K562 (cell line): ENCODE measurements at regions of chr1 and their contacts with region 1.

Region 1: DNA sequence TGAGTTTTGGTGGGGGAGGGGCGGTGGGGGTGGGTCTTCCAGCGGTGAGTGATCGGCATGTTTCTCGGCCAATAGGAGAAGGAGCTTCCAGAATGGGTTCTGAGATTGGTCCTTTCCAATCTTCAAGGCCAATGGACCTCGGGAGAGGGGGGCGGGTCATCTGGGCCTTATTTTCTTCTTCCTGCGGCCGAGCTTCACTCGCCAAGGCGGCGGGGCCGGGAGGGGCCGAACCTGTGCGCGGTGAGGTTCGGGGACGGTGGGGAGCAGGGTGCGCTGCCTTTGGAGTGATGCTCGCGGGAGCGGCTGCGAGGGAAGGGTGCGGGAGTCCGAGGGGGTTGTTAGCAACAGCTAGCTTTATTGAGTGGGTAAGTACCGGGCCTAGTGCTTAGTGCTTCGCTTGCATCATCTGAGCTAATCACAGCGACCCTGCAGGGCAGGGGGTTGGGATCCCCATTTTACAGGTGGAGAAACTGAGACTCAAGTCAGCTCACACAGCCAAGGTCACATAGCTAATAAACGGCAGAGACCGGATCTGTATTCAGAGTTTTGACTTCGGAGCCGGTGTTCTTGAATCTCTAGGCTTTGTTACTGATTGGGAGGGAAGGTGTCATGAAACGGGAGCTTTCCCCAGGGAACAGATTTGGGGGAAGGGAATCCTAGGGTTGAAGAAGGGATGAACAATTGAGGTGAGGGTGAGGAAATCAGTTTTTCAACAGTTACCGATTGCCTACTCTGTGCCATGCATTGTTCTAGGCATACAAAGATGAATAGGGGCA is 549 bp downstream of the KDM4A start:
- DNase-seq: peak; percentile 99 to 100 (median 100)
- ATAC-seq: peak; percentile 93
- H3K4me3 ChIP-seq: peak overlapping the region; percentile 81
- H3K27ac ChIP-seq: peak overlapping the region; percentile 88
- H3K4me1 ChIP-seq: peaks cover 3 to 14% of the 10 kb centered on the region in 2 experiments
- H3K27me3 ChIP-seq: peaks cover 0 to 4% of the 10 kb centered on the region in 2 experiments; a peak in 3 of 5 replicates
- CTCF ChIP-seq: no peak
- EP300 ChIP-seq: peak; percentile 2; the same call in 1 of the 2 replicates
- POLR2A ChIP-seq: peak; percentile 98
- RAD21 ChIP-seq: no peak

Region 2: GRCh38 chr1:43636006-43636641 is 14.4 kb before region 1 on chr1:
- CTCF ChIA-PET with region 1: no interaction called
- POLR2A ChIA-PET with region 1: interaction called, 21 read pairs
- in situ Hi-C with region 1: no loop called
- intact Hi-C with region 1: no loop called
- DNase-seq: peak in 1 of 4 experiments; percentile 1
- ATAC-seq: no peak
- H3K4me3 ChIP-seq: no peak overlapping the region
- H3K27ac ChIP-seq: no peak overlapping the region
- H3K4me1 ChIP-seq: no peaks in the 10 kb centered on the region
- H3K27me3 ChIP-seq: peaks cover 31 to 47% of the 10 kb centered on the region in 2 experiments
- CTCF ChIP-seq: no peak
- EP300 ChIP-seq: no peak
- POLR2A ChIP-seq: no peak
- RAD21 ChIP-seq: no peak

Region 3: GRCh38 chr1:43668956-43669355 is 18.5 kb after region 1 on chr1:
- CTCF ChIA-PET with region 1: no interaction called
- POLR2A ChIA-PET with region 1: interaction called, 20 read pairs
- in situ Hi-C with region 1: no loop called
- intact Hi-C with region 1: no loop called
- DNase-seq: no peak
- ATAC-seq: no peak
- H3K4me3 ChIP-seq: no peak overlapping the region
- H3K27ac ChIP-seq: no peak overlapping the region
- H3K4me1 ChIP-seq: no peaks in the 10 kb centered on the region
- H3K27me3 ChIP-seq: no peaks in the 10 kb centered on the region
- CTCF ChIP-seq: no peak
- EP300 ChIP-seq: no peak
- POLR2A ChIP-seq: no peak
- RAD21 ChIP-seq: no peak